Heart left ventricle (tissue), 16 donors: ENCODE measurements at regions of chr7 and their contacts with region 1.

Region 1: DNA sequence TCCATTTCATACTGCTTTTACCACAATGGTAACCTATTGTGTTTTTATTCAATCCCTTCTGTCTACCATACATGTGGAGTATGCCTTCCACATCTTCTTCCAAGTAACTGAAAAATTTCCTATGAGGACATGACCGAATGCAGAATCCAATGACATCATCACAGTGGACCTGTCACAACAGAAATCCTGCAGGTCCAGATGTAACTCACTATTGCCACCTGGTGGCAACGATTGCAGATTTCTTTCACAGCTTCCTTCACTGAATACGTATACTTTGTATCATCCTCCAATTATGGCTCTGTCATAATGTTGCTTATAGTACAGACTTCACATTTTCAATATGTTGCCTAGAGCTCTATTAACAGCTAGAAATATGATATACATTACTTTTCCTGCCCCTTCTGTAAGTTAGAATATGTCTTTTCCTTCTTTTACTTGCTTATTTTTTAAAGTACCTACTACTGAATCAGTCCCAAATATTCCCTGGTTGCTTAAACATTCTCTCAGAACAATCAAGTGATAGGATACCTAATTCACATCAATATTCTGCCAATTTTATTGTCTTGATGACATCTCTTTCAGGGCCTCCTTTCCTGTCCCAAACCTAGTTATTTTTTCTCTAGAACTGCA is 45.4 kb downstream of the SLC13A1 start:
- DNase-seq: peak in 4 of 5 donors; percentile 41 to 67 (median 50)
- ATAC-seq: peak in 3 of 4 donors; percentile 66 to 84 (median 68)
- H3K4me3 ChIP-seq: no peak overlapping the region
- H3K27ac ChIP-seq: no peak overlapping the region
- H3K4me1 ChIP-seq: no peaks in the 10 kb centered on the region
- H3K27me3 ChIP-seq: no peaks in the 10 kb centered on the region
- CTCF ChIP-seq: peak; percentile 66 to 89 (median 78)
- POLR2A ChIP-seq: no peak

Region 2: GRCh38 chr7:122219253-122219865 is 935.0 kb before region 1 on chr7:
- intact Hi-C with region 1: loop called in 5 of 10 experiments (anchors 5 to 10 kb)
- DNase-seq: no peak
- ATAC-seq: no peak
- H3K4me3 ChIP-seq: no peak overlapping the region
- H3K27ac ChIP-seq: no peak overlapping the region
- H3K4me1 ChIP-seq: no peaks in the 10 kb centered on the region
- H3K27me3 ChIP-seq: no peaks in the 10 kb centered on the region
- CTCF ChIP-seq: peak; percentile 36 to 70 (median 60)
- POLR2A ChIP-seq: no peak

Region 3: GRCh38 chr7:122550545-122550944 is 603.8 kb before region 1 on chr7:
- intact Hi-C with region 1: loop called in 2 of 10 experiments (anchors 10 kb)
- DNase-seq: no peak
- ATAC-seq: no peak
- H3K4me3 ChIP-seq: no peak overlapping the region
- H3K27ac ChIP-seq: no peak overlapping the region
- H3K4me1 ChIP-seq: peaks cover 0 to 4% (median 0%) of the 10 kb centered on the region in 12 donors
- H3K27me3 ChIP-seq: no peaks in the 10 kb centered on the region
- CTCF ChIP-seq: peak in 2 of 12 donors; percentile 11
- POLR2A ChIP-seq: no peak

Region 4: GRCh38 chr7:122803323-122803722 is 351.0 kb before region 1 on chr7:
- intact Hi-C with region 1: loop called in 7 of 10 experiments (anchors 1 to 10 kb)
- DNase-seq: no peak
- ATAC-seq: peak in 2 of 4 donors; percentile 19 to 66
- H3K4me3 ChIP-seq: no peak overlapping the region
- H3K27ac ChIP-seq: peak overlapping the region in 11 of 12 donors; percentile 22 to 80 (median 72)
- H3K4me1 ChIP-seq: peaks cover 0 to 34% (median 10%) of the 10 kb centered on the region in 12 donors
- H3K27me3 ChIP-seq: no peaks in the 10 kb centered on the region
- CTCF ChIP-seq: peak; percentile 30 to 72 (median 51)
- POLR2A ChIP-seq: no peak

Region 5: GRCh38 chr7:123215350-123215749 is 61.0 kb after region 1 on chr7:
- intact Hi-C with region 1: loop called in 1 of 10 experiments (anchors 2 kb)
- DNase-seq: no peak
- ATAC-seq: no peak
- H3K4me3 ChIP-seq: no peak overlapping the region
- H3K27ac ChIP-seq: no peak overlapping the region
- H3K4me1 ChIP-seq: peaks cover 0 to under 1% (median 0%) of the 10 kb centered on the region in 12 donors
- H3K27me3 ChIP-seq: no peaks in the 10 kb centered on the region
- CTCF ChIP-seq: no peak
- POLR2A ChIP-seq: no peak